ENCODE measurements at regions of chr16 and their contacts with region 1.

Region 1: DNA sequence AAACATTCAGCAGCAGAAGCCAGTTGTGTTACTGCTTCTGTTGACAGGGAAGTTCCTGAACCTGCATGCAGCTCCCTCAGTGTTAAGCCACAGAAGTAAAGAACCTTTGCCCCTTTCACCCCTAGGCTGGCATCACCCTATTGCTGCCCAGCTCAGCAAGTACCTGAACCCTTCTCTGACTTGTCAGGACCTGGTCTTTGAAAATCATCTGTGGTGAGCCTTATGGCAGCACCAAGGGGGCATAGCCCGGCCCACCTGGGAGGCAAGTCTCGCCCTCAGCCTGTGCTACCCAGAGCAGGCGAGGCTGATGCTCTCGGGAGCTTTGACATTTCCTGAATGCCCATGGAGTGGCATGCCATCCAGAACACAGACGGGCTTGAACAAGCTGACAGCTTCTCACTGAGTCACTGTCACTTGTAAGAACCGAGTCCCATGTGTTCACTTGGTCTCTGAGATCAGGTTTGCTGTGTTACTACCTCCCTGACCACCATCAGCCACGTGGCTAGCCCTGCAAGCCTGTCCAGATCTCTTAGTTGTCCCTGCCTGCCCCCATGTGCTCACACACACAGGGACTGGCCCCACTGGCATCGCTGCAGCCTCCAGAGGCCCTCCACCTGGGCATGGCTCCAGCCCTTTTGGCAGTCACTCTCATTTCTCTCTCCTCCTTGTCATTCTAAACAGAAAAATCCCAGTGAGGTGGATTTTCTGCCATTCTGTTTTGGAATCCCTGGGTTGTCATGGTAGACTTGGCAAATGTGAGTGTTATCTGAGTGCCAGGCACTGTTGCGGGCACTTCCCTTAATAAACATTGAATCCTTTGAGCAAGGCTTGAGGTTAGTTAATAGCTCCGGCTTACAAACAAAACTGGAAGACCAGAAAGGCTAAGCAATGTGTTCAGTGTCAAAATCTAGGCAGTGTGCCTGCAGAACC is 2.9 kb upstream of the CARMIL2 start:
- DNase-seq: no peak
- H3K4me3 Mint-ChIP-seq: no peak overlapping the region
- H3K27ac Mint-ChIP-seq: no peak overlapping the region
- H3K4me1 Mint-ChIP-seq: peaks cover 24% of the 10 kb centered on the region
- H3K27me3 Mint-ChIP-seq: no peaks in the 10 kb centered on the region

Region 2: DNA sequence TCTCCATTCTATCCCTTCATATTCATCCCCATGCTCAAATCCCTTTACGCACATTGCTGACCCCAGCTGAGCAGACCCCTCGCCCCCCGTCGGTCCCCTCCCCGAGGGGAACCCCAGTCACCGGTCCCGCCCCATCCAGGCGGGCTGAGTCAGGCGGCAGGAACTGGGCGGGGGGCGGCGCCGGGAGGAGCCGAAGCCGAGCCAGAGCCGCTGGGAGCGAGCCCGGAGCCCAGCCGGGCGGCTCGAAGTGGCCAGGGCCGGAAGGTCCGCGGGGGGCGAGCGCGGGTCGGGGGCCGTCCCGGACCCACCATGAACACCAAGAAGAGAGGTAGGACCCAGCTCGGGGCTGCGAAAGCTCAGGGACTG is 104.8 kb before region 1 on chr16:
- CTCF ChIA-PET with region 1: interaction called, 9 read pairs
- POLR2A ChIA-PET with region 1: interaction called, 107 read pairs
- DNase-seq: peak; percentile 61
- H3K4me3 Mint-ChIP-seq: peak overlapping the region; percentile 68
- H3K27ac Mint-ChIP-seq: peak overlapping the region; percentile 23
- H3K4me1 Mint-ChIP-seq: peaks cover 26% of the 10 kb centered on the region
- H3K27me3 Mint-ChIP-seq: peaks cover 39% of the 10 kb centered on the region

Region 3: DNA sequence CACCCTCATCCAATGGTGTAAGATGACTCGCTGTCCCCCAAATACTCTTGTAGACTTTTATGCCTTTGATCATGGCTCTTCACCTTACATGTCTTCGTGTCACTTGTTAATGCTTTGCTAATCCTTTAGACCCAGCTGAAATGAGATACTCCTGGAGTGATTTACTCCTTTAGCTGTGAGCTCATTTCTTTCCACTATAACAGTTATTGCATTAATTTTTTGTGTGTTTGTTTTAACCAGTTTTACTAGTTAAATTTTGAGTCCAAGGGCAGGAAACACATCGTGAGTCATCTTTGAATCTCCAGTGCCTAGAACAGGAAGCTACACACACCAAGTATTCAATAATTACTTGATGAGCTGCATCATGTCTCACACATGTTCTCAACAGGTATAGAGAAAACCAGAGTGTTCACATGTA is 86.2 kb before region 1 on chr16:
- CTCF ChIA-PET with region 1: interaction called, 75 read pairs
- POLR2A ChIA-PET with region 1: interaction called, 77 read pairs
- DNase-seq: no peak
- H3K4me3 Mint-ChIP-seq: peak overlapping the region; percentile 19
- H3K27ac Mint-ChIP-seq: peak overlapping the region; percentile 97
- H3K4me1 Mint-ChIP-seq: peaks cover 53% of the 10 kb centered on the region
- H3K27me3 Mint-ChIP-seq: no peaks in the 10 kb centered on the region

Region 4: GRCh38 chr16:67660564-67661028 is 18.6 kb after region 1 on chr16 and contains the start of gene PARD6A:
- CTCF ChIA-PET with region 1: interaction called, 36 read pairs
- POLR2A ChIA-PET with region 1: interaction called, 109 read pairs
- DNase-seq: peak; percentile 97
- H3K4me3 Mint-ChIP-seq: peak within 1 kb of the TSS; percentile 89
- H3K27ac Mint-ChIP-seq: peak within 1 kb of the TSS; percentile 96
- H3K4me1 Mint-ChIP-seq: peaks cover 35% of the 10 kb centered on the region
- H3K27me3 Mint-ChIP-seq: no peaks in the 10 kb centered on the region
- total RNA-seq, gene PARD6A: 12.2 to 14.0 TPM

Region 5: GRCh38 chr16:67685388-67686112 is 43.5 kb after region 1 on chr16:
- CTCF ChIA-PET with region 1: no interaction called
- POLR2A ChIA-PET with region 1: no interaction called
- DNase-seq: no peak
- H3K4me3 Mint-ChIP-seq: no peak overlapping the region
- H3K27ac Mint-ChIP-seq: peak overlapping the region; percentile 85
- H3K4me1 Mint-ChIP-seq: peaks cover 26% of the 10 kb centered on the region
- H3K27me3 Mint-ChIP-seq: no peaks in the 10 kb centered on the region

Region 6: GRCh38 chr16:67782567-67783352 is 140.7 kb after region 1 on chr16:
- CTCF ChIA-PET with region 1: no interaction called
- POLR2A ChIA-PET with region 1: no interaction called
- DNase-seq: no peak
- H3K4me3 Mint-ChIP-seq: no peak overlapping the region
- H3K27ac Mint-ChIP-seq: no peak overlapping the region
- H3K4me1 Mint-ChIP-seq: peaks cover 26% of the 10 kb centered on the region
- H3K27me3 Mint-ChIP-seq: no peaks in the 10 kb centered on the region